ENCODE measurements at regions of chr12 and their contacts with region 1.

Region 1: GRCh38 chr12:63668028-63668799 is at the start of gene DPY19L2:
- DNase-seq: peak; percentile 70 to 97 (median 80)

Region 2: DNA sequence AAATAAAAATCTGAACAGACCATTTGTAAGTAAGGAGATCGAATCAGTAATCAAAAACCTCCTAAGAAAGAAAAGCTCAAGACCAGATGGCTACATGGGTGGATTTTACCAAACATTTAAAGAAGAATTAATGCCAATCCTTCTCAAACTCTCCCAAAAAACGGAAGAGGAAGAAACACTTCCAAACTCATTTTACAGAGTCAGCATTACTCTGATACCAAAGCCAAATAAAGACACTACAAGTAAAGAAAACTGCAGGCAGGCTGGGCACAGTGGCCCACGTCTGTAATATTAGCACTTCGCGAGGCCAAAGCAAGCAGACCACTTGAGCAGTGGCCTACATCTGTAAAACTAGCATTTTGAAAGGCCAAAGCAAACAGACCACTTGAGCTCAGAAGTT is 159.7 kb before region 1 on chr12:
- intact Hi-C with region 1: no loop called
- DNase-seq: no peak

Region 3: DNA sequence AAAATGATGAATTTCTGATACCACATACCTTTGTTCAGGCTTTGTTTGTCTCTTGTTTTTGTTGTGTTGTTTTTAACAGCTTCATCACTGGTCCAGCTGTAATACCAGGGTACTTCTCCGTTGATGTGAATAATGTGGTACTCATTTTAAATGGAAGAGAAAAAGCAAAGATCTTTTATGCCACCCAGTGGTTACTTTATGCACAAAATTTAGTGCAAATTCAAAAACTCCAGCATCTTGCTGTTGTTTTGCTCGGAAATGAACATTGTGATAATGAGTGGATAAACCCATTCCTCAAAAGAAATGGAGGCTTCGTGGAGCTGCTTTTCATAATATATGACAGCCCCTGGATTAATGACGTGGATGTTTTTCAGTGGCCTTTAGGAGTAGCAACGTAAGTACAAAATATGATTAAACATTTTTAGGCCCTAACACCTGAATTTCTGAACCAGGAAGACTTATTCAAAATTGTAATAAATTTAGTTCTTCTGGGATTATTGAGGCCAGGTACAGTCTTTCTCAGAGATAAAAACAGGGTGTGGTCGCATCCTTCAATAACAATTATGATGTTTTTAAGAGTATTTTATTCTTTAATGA is 133.9 kb after region 1 on chr12:
- intact Hi-C with region 1: loop called (anchors 2 kb)
- DNase-seq: no peak

Region 4: GRCh38 chr12:63967358-63968145 is 299.3 kb after region 1 on chr12:
- intact Hi-C with region 1: no loop called
- DNase-seq: no peak

Measured in posterior cingulate gyrus (tissue), 11 donors.